ENCODE measurements at regions of chr1 and their contacts with region 1.

Region 1: GRCh38 chr1:212035123-212035834 is at the starts of genes DTL and INTS7:
- DNase-seq: peak; percentile 99
- ATAC-seq: peak; percentile 83
- H3K4me3 Mint-ChIP-seq: peak within 1 kb of the TSS; percentile 85
- H3K27ac Mint-ChIP-seq: peak within 1 kb of the TSS; percentile 100
- H3K4me1 Mint-ChIP-seq: peaks cover 56% of the 10 kb centered on the region
- H3K27me3 Mint-ChIP-seq: no peaks in the 10 kb centered on the region
- total RNA-seq, gene DTL: 82.1 to 114 TPM
- total RNA-seq, gene INTS7: 23.7 to 28.6 TPM

Region 2: DNA sequence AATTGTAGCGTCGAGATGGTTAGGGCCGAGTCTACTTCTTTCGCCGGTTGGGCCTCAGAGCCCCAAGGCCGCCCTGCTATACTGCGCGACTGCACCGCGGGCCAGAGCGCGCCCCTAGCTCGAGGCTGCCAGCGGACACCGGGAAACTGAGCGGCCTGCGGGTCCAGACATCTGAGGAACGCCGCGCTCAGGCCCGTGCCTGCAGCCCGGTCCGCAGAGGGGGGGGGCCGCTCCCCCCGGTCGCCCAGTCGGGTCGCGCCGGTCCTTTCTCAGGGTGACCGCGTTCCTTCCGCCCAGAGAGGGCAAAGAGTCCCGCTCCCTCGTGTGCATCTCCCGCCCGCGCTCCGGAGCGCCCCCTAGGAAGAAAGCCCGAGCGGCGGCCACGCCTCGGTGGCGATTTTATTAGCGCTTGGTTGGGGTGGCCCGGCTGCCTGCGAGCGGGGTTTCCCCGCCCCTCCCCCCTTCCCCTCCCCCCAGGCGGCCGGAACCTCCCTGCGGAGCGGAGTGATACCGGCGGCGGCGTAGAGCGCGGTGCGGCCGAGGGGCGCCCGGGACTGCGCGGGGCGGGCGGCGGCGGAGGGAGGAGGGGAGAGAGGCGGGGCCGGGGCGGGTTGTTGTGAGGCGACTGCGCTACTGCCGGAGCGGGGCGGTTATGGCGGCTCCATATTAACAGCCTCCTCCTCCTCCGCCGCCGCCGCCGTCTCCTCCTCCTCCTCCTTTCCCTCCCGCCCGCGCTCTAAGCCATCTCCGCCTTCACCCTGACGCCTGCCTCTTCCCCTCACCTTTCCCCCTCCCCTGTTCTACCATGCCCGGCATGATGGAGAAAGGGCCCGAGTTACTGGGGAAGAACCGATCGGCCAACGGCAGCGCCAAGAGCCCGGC is 776.3 kb before region 1 on chr1 and contains the start of gene RCOR3:
- CTCF ChIA-PET with region 1: no interaction called
- POLR2A ChIA-PET with region 1: no interaction called
- intact Hi-C with region 1: loop called in 1 of 2 experiments (anchors 1 kb)
- DNase-seq: peak; percentile 97
- ATAC-seq: peak; percentile 83
- H3K4me3 Mint-ChIP-seq: peak within 1 kb of the TSS; percentile 90
- H3K27ac Mint-ChIP-seq: peak within 1 kb of the TSS; percentile 96
- H3K4me1 Mint-ChIP-seq: peaks cover 13% of the 10 kb centered on the region
- H3K27me3 Mint-ChIP-seq: no peaks in the 10 kb centered on the region
- total RNA-seq, gene RCOR3: 31.0 to 33.4 TPM

Region 3: GRCh38 chr1:211680752-211681327 is 354.4 kb before region 1 on chr1:
- CTCF ChIA-PET with region 1: interaction called, 15 read pairs
- POLR2A ChIA-PET with region 1: interaction called, 10 read pairs
- intact Hi-C with region 1: loop called (anchors 1 kb)
- DNase-seq: peak; percentile 85
- ATAC-seq: peak; percentile 94
- H3K4me3 Mint-ChIP-seq: no peak overlapping the region
- H3K27ac Mint-ChIP-seq: peak overlapping the region; percentile 71
- H3K4me1 Mint-ChIP-seq: peaks cover 7% of the 10 kb centered on the region
- H3K27me3 Mint-ChIP-seq: no peaks in the 10 kb centered on the region

Region 4: GRCh38 chr1:212012034-212012740 is 23.1 kb before region 1 on chr1:
- CTCF ChIA-PET with region 1: interaction called, 26 read pairs
- POLR2A ChIA-PET with region 1: no interaction called
- intact Hi-C with region 1: loop called (anchors 1 kb)
- DNase-seq: peak; percentile 80
- ATAC-seq: peak; percentile 99
- H3K4me3 Mint-ChIP-seq: no peak overlapping the region
- H3K27ac Mint-ChIP-seq: no peak overlapping the region
- H3K4me1 Mint-ChIP-seq: no peaks in the 10 kb centered on the region
- H3K27me3 Mint-ChIP-seq: no peaks in the 10 kb centered on the region

Region 5: DNA sequence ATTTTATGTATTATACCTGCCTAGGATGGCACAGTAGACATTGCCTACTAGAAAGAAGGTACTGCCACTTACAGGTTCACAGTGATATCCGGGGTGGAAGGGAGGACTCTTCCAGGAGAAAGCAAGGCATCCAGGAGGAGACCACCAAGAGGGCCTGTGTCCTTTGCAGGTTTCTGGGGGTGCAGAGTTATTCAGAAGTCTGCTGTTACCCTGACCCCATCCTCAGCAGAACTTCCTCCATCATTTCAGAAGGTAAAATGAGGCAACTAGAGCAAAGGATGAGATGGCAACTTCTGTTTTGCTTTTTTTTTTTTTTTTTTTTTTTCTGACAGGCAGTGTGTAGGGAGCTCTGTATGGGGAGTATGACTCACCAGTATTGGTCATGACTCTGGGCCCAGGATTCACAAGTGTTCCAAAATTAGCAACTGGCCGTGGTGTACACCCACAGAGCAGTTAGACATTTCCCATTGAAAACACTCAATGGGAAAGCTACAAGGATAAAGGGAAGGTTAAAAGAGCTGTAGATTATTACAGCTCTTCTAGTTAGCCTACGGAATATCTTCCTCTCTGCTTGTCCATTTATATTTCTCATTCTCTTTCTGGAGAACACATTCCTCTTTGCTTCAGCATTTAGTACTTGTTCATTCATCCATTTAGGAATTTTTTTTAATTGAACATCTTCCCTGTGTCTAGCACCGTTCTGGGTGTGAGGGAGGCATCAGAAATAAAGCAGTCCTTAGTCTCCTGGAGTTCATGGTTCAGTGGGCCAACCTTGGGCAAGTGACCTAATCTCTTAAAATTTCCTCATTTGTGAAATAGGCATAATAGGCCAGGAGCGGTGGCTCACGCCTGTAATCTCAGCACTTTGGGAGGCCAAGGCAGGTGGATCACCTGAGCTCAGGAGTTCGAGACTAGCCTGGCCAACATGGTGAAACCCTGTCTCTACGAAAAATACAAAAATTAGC is 199.4 kb after region 1 on chr1:
- CTCF ChIA-PET with region 1: no interaction called
- POLR2A ChIA-PET with region 1: no interaction called
- intact Hi-C with region 1: loop called in 1 of 2 experiments (anchors 5 kb)
- DNase-seq: peak; percentile 61
- ATAC-seq: peak; percentile 95
- H3K4me3 Mint-ChIP-seq: no peak overlapping the region
- H3K27ac Mint-ChIP-seq: peak overlapping the region; percentile 39
- H3K4me1 Mint-ChIP-seq: peaks cover 35% of the 10 kb centered on the region
- H3K27me3 Mint-ChIP-seq: no peaks in the 10 kb centered on the region

Region 6: DNA sequence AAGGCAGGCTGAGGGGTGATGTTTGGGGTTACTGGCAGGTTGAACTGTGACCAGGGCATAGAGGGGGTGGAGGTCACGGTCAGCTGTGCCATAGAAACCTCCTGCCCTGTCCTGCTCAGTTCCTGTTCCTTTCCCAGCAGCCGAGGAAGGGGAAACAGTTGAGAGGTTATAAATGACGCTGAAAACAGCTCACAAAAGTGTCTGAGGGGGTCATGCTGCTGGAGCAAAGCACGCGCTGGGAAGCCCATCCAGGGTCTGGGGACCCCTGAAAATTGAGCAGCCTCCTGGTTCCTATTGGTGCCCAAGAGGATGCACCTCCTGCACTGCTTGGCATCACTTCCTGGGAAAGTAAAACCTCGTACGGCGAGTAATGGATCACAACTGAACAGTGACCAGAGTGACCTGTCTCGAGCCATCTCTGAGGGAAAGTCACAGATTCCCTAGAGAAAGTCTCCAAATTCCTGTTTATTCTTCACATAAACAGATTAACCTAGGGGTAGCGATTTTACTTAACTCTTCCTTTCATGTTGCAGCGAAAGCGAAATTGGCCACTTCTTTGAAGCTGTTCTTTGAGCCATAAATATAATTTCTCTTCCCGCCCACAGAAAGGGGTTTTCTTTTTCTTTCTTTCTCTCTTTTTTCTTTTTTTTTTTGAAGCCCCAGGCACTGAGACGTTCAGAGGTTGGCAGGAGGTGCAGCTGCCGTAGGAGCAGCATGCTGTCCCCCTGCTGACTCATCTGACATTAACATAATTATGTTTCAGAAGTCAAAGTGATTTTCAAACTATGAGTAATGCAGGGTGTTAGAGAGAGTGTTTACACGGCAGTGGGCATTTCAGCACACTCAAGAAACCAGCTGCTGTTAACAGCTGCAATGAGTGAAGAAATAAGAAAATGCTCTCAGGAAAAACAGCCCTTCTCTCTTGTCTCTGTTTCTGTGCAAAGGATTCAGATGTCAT is 531.5 kb after region 1 on chr1:
- CTCF ChIA-PET with region 1: no interaction called
- POLR2A ChIA-PET with region 1: no interaction called
- intact Hi-C with region 1: loop called in 1 of 2 experiments (anchors 5 kb)
- DNase-seq: peak; percentile 81
- ATAC-seq: peak; percentile 97
- H3K4me3 Mint-ChIP-seq: peak overlapping the region; percentile 77
- H3K27ac Mint-ChIP-seq: peak overlapping the region; percentile 91
- H3K4me1 Mint-ChIP-seq: peaks cover 33% of the 10 kb centered on the region
- H3K27me3 Mint-ChIP-seq: peaks cover 2% of the 10 kb centered on the region